GM10248 (cell line): ENCODE measurements at regions of chr15 and their contacts with region 1.

Region 1: DNA sequence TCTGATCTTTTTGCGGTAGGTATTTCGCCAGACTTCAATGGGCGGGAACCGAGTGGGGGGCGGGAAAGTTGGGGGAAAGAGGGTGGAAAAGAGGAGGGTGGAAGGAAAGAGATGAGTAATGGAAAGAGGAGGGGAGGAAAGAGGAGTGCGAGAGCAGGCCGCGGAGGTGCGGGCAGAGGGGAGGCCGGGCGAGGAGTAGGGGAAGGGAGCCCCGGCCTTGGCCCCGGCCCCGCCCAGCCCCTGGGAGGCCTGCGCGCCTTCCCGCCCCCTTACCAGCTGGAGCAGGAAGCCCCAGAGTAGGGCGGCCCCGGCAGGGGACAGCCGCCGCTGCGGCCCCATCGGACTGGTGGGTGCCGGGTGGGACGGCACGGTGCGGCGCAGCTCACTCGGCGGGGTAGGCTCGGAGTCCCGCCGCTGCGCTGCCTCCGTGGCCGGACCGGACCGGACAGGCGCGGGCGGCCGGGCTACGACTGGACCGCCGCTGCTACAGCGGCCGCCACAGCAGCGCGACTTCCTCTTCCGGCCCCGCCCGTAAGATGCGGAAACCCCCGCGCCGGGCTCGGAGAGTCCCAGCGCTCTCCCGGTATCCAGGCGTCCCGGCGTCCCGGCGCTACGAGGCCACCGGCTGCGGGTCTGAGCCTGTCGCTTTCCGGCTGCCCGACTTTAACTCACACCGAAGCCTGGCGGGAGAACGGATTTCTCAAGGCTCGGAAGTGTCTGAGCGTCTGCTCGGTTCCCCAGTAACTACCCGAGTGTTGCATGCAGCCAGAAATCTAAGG is at the start of gene SPPL2A:
- DNase-seq: peak; percentile 95
- CTCF ChIP-seq: no peak

Region 2: DNA sequence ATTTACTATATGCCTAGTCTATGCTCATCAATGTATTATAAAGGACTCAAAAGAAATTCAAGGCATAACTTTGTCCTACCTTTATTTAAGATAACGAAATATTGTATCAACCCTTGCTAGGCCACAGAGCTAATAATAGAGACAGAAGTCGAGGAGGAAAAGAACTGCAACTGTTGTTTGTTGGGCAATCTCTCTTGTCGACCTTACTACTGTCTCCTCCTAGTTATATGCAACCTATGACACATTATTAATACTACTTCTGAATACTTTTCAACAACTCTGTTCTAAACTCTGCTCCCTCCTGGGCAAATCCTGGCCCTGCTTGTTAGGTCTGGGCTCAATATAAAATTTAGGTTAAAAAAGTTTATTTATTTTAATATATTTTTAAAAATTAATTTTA is 24.4 kb before region 1 on chr15:
- CTCF ChIA-PET with region 1: no interaction called
- POLR2A ChIA-PET with region 1: no interaction called
- DNase-seq: no peak
- CTCF ChIP-seq: no peak

Region 3: GRCh38 chr15:50751394-50751793 is 14.0 kb before region 1 on chr15:
- CTCF ChIA-PET with region 1: interaction called, 11 read pairs
- POLR2A ChIA-PET with region 1: interaction called, 5 read pairs
- DNase-seq: no peak
- CTCF ChIP-seq: no peak